PC-9 (cell line): ENCODE measurements at regions of chr3 and their contacts with region 1.

Region 1: GRCh38 chr3:194134757-194135528 is 1.0 kb upstream of the HES1 start:
- DNase-seq: peak; percentile 96 to 100
- H3K4me3 ChIP-seq: peak overlapping the region; percentile 55
- H3K27ac ChIP-seq: peak overlapping the region; percentile 88
- H3K4me1 ChIP-seq: peaks cover 60% of the 10 kb centered on the region
- H3K27me3 ChIP-seq: no peaks in the 10 kb centered on the region
- CTCF ChIP-seq: no peak

Region 2: GRCh38 chr3:193701904-193702635 is 432.9 kb before region 1 on chr3:
- CTCF ChIA-PET with region 1: interaction called, 3 read pairs
- POLR2A ChIA-PET with region 1: interaction called, 15 read pairs
- intact Hi-C with region 1: no loop called
- DNase-seq: no peak
- H3K4me3 ChIP-seq: no peak overlapping the region
- H3K27ac ChIP-seq: no peak overlapping the region
- H3K4me1 ChIP-seq: no peaks in the 10 kb centered on the region
- H3K27me3 ChIP-seq: no peaks in the 10 kb centered on the region
- CTCF ChIP-seq: no peak

Region 3: GRCh38 chr3:193843474-193844301 is 291.3 kb before region 1 on chr3:
- CTCF ChIA-PET with region 1: no interaction called
- POLR2A ChIA-PET with region 1: interaction called, 19 read pairs
- intact Hi-C with region 1: no loop called
- DNase-seq: peak; percentile 67 to 86
- H3K4me3 ChIP-seq: no peak overlapping the region
- H3K27ac ChIP-seq: peak overlapping the region; percentile 71
- H3K4me1 ChIP-seq: peaks cover 39% of the 10 kb centered on the region
- H3K27me3 ChIP-seq: no peaks in the 10 kb centered on the region
- CTCF ChIP-seq: no peak

Region 4: GRCh38 chr3:193928354-193929209 is 206.4 kb before region 1 on chr3:
- CTCF ChIA-PET with region 1: no interaction called
- POLR2A ChIA-PET with region 1: no interaction called
- intact Hi-C with region 1: loop called (anchors 5 kb)
- DNase-seq: peak; percentile 42 to 88
- H3K4me3 ChIP-seq: no peak overlapping the region
- H3K27ac ChIP-seq: peak overlapping the region; percentile 54
- H3K4me1 ChIP-seq: peaks cover 28% of the 10 kb centered on the region
- H3K27me3 ChIP-seq: no peaks in the 10 kb centered on the region
- CTCF ChIP-seq: no peak

Region 5: GRCh38 chr3:194030369-194030768 is 104.6 kb before region 1 on chr3:
- CTCF ChIA-PET with region 1: no interaction called
- POLR2A ChIA-PET with region 1: interaction called, 7 read pairs
- intact Hi-C with region 1: loop called (anchors 1 kb)
- DNase-seq: peak; percentile 69 to 88
- H3K4me3 ChIP-seq: no peak overlapping the region
- H3K27ac ChIP-seq: peak overlapping the region; percentile 40
- H3K4me1 ChIP-seq: peaks cover 53% of the 10 kb centered on the region
- H3K27me3 ChIP-seq: no peaks in the 10 kb centered on the region
- CTCF ChIP-seq: no peak

Region 6: GRCh38 chr3:194204042-194204987 is 69.4 kb after region 1 on chr3:
- CTCF ChIA-PET with region 1: no interaction called
- POLR2A ChIA-PET with region 1: interaction called, 10 read pairs
- intact Hi-C with region 1: no loop called
- DNase-seq: peak; percentile 62 to 78
- H3K4me3 ChIP-seq: peak overlapping the region; percentile 58
- H3K27ac ChIP-seq: peak overlapping the region; percentile 71
- H3K4me1 ChIP-seq: peaks cover 47% of the 10 kb centered on the region
- H3K27me3 ChIP-seq: no peaks in the 10 kb centered on the region
- CTCF ChIP-seq: no peak

Region 7: DNA sequence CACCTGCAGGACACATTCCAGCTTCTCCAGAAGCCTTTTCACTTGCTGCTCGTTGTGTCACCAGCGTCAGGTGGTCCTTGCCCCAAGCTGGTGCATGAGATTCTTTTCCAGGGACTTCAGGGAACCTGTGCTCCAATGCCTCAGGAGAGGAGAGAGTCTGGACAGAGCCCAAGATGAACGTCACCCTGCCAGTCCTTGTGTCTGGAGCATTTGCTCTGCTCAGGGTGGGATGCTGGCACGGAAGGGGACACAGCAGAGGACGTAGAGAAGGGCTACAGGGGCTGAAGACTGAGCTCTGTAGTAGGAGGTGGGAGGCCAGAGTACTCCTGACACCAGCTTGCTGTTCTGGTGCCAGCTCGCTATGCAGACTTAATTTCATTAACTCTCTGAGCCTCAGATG is 873.9 kb after region 1 on chr3:
- CTCF ChIA-PET with region 1: no interaction called
- POLR2A ChIA-PET with region 1: interaction called, 42 read pairs
- intact Hi-C with region 1: no loop called
- DNase-seq: no peak
- H3K4me3 ChIP-seq: no peak overlapping the region
- H3K27ac ChIP-seq: no peak overlapping the region
- H3K4me1 ChIP-seq: peaks cover 35% of the 10 kb centered on the region
- H3K27me3 ChIP-seq: no peaks in the 10 kb centered on the region
- CTCF ChIP-seq: no peak